Activated T-helper 2 cell treated with anti-CD3 and anti-CD28 coated beads, Interferon-gamma antibody, Interleukin-2, Interleukin-4, amounts not matched to agents 10 μg/mL and 5 μg/mL and 100 μg/mL, durations not matched to agents 14 hours and 24 hours and 36 hours (primary cell): ENCODE measurements at regions of chr19 and their contacts with region 1.

Region 1: GRCh38 chr19:14031719-14032480 is at the start of gene IL27RA:
- DNase-seq: peak; percentile 80
- H3K4me3 Mint-ChIP-seq: peak within 1 kb of the TSS; percentile 92
- H3K27ac Mint-ChIP-seq: peak within 1 kb of the TSS; percentile 86
- H3K4me1 Mint-ChIP-seq: peaks cover 10% of the 10 kb centered on the region
- H3K27me3 Mint-ChIP-seq: no peaks in the 10 kb centered on the region
- total RNA-seq, gene IL27RA: 76.6 and 79.1 TPM in 2 replicates

Region 2: GRCh38 chr19:13952154-13953035 is 79.5 kb before region 1 on chr19 and contains the start of gene DCAF15:
- intact Hi-C with region 1: loop called (anchors 5 kb)
- DNase-seq: peak; percentile 99
- H3K4me3 Mint-ChIP-seq: peak within 1 kb of the TSS; percentile 97
- H3K27ac Mint-ChIP-seq: peak within 1 kb of the TSS; percentile 93
- H3K4me1 Mint-ChIP-seq: peaks cover 15% of the 10 kb centered on the region
- H3K27me3 Mint-ChIP-seq: peaks cover 2% of the 10 kb centered on the region
- total RNA-seq, gene DCAF15: 60.6 and 64.0 TPM in 2 replicates

Region 3: DNA sequence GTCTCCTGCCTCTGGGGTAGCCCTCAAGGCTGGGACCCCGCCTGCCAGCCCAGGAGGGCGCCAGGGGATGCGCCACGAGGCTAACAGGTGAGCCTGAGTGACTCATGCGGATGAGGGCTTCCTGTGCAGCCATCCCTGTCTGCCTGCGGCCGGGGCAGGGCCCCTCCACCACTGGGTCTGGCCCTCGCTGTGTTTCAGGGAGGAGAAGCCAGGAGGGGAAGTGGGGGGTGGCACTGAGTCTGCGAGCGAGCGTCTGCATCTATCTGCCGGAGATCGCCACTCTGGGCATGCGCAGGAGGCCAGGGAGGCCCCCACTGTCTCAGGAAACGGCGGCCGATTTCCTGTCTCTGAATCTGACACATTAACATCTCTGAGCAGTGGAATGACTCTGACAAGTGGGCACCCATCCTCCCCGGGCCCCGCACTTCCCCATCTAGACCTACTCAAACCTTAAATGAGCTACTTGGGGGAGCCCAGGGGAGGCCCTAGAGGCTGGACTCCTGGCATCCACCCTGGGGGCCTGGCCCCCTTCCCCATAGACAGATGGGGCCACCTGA is 45.5 kb before region 1 on chr19:
- intact Hi-C with region 1: loop called (anchors 1 kb)
- DNase-seq: peak; percentile 98
- H3K4me3 Mint-ChIP-seq: peak overlapping the region; percentile 60
- H3K27ac Mint-ChIP-seq: peak overlapping the region; percentile 95
- H3K4me1 Mint-ChIP-seq: peaks cover 33% of the 10 kb centered on the region
- H3K27me3 Mint-ChIP-seq: no peaks in the 10 kb centered on the region

Region 4: DNA sequence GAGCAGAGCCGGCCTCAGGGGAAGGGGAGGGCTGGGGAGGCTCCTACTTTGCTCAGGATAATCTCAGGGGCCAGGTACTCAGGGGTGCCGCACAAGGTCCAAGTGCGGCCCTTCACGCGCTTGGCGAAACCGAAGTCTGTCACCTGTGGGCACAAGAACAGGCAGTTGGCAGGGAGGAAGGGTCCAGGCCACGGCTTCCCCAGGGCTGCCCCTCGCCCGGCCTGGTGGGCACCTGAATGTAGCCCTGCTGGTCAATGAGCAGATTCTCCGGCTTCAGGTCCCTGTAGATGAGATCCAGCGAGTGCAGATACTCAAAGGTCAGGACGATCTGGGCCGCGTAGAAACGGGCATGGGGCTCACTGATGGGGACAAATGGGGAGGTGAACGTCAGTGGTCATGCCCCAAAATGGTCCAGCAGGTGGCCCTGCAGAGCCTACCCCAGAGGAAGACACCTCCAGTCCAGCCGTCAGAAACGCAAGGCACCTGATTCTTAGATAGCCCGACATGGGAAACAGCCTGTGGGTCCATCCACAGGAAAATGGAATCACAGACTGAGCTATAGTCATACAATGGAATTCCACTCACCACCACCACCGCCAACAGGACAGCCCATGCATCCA is 65.7 kb after region 1 on chr19:
- intact Hi-C with region 1: no loop called
- DNase-seq: no peak
- H3K4me3 Mint-ChIP-seq: no peak overlapping the region
- H3K27ac Mint-ChIP-seq: no peak overlapping the region
- H3K4me1 Mint-ChIP-seq: no peaks in the 10 kb centered on the region
- H3K27me3 Mint-ChIP-seq: no peaks in the 10 kb centered on the region